ENCODE measurements at regions of chr9 and their contacts with region 1.

Region 1: GRCh38 chr9:121321016-121321503 is 49.0 kb downstream of the STOM start:
- DNase-seq: peak in 1 of 5 donors; percentile 26
- ATAC-seq: no peak
- H3K4me3 ChIP-seq: no peak overlapping the region
- H3K27ac ChIP-seq: peak overlapping the region in 11 of 12 donors; percentile 26 to 98 (median 85)
- H3K4me1 ChIP-seq: peaks cover 10 to 88% (median 67%) of the 10 kb centered on the region in 12 donors
- H3K27me3 ChIP-seq: no peaks in the 10 kb centered on the region
- CTCF ChIP-seq: no peak
- POLR2A ChIP-seq: no peak

Region 2: DNA sequence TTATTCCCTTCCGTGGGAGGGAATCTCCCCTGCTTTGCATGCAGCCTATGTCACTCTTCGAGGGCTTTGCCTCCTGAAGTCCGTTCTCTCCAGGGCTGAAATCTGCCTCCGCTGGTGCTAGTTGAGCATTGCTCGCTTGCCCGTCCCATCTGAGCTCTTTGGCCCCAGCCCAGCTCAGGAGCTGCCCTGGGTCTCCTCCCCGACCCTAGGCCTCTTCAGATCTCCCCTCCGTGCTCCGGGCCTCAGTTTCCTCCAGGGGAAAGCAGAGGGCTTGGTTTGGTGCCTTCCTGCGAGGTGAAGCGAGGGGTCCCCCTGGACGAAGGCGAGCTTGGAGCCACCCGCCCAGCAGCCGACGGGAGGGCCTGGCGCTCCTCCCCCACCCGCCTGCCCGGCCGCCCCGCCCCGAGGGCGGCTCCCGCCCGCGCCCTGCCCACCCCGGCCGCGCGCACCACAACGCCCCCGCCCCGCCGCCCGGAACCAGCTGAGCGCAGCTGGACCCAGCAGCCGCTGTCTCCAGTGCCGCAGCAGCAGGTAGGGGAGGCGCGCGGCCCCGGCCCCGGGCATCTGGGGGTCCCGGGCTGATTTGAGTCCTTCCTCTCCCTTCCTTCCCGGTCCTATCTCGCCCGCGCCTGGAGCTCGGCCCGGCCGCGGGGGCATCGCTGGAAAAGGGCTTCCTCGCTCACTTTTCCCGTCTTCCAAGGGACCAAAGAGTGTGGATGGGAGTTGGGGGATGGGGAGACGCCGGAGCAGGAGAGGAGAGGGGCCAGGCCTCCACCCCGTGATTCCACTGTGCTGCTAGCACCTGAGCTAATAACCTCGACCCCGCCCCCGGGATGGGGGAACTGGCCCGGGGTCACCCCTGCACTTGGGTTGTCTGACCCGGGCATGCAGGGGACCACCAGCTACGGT is 53.1 kb before region 1 on chr9 and contains the start of gene GSN:
- intact Hi-C with region 1: loop called in 3 of 10 experiments (anchors 5 to 10 kb)
- DNase-seq: peak; percentile 88 to 94 (median 90)
- ATAC-seq: peak; percentile 65 to 92 (median 84)
- H3K4me3 ChIP-seq: peak within 1 kb of the TSS; percentile 75 to 95 (median 88)
- H3K27ac ChIP-seq: peak within 1 kb of the TSS; percentile 30 to 96 (median 88)
- H3K4me1 ChIP-seq: peaks cover 6 to 65% (median 54%) of the 10 kb centered on the region in 12 donors
- H3K27me3 ChIP-seq: no peaks in the 10 kb centered on the region
- CTCF ChIP-seq: peak in 4 of 12 donors; percentile 5 to 32 (median 8)
- POLR2A ChIP-seq: peak in 1 of 2 donors; percentile 81
- total RNA-seq, gene GSN: 422 to 2,088 (median 703) TPM

Region 3: GRCh38 chr9:121376214-121376830 is 55.3 kb after region 1 on chr9:
- intact Hi-C with region 1: loop called (anchors 1 to 2 kb)
- DNase-seq: no peak
- ATAC-seq: no peak
- H3K4me3 ChIP-seq: no peak overlapping the region
- H3K27ac ChIP-seq: peak overlapping the region in 1 of 12 donors; percentile 4
- H3K4me1 ChIP-seq: peaks cover 4 to 43% (median 29%) of the 10 kb centered on the region in 12 donors
- H3K27me3 ChIP-seq: no peaks in the 10 kb centered on the region
- CTCF ChIP-seq: peak in 11 of 12 donors; percentile 39 to 79 (median 64)
- POLR2A ChIP-seq: no peak

Measured in heart left ventricle (tissue), 16 donors.